ENCODE measurements at regions of chr5 and their contacts with region 1.

Region 1: GRCh38 chr5:10849278-10849677 is 88.2 kb upstream of the DAP start:
- DNase-seq: no peak
- ATAC-seq: no peak
- H3K4me3 ChIP-seq: no peak overlapping the region
- H3K4me3 Mint-ChIP-seq: no peak overlapping the region
- H3K27ac ChIP-seq: no peak overlapping the region
- H3K27ac Mint-ChIP-seq: no peak overlapping the region
- H3K4me1 ChIP-seq: no peaks in the 10 kb centered on the region
- H3K4me1 Mint-ChIP-seq: no peaks in the 10 kb centered on the region
- H3K27me3 ChIP-seq: no peaks in the 10 kb centered on the region
- H3K27me3 Mint-ChIP-seq: peaks cover 4 to 36% (median 7%) of the 10 kb centered on the region in 5 donors

Region 2: GRCh38 chr5:10018203-10019060 is 830.8 kb before region 1 on chr5:
- CTCF ChIA-PET with region 1: no interaction called
- POLR2A ChIA-PET with region 1: no interaction called
- intact Hi-C with region 1: loop called in 1 of 2 experiments (anchors 10 kb)
- DNase-seq: no peak
- ATAC-seq: no peak
- H3K4me3 ChIP-seq: no peak overlapping the region
- H3K4me3 Mint-ChIP-seq: no peak overlapping the region
- H3K27ac ChIP-seq: no peak overlapping the region
- H3K27ac Mint-ChIP-seq: no peak overlapping the region
- H3K4me1 ChIP-seq: no peaks in the 10 kb centered on the region
- H3K4me1 Mint-ChIP-seq: no peaks in the 10 kb centered on the region
- H3K27me3 ChIP-seq: no peaks in the 10 kb centered on the region
- H3K27me3 Mint-ChIP-seq: peaks cover 0 to 10% (median 0%) of the 10 kb centered on the region in 5 donors

Measured in naive thymus-derived CD4-positive, alpha-beta T cell (primary cell).